ENCODE measurements at regions of chr12 and their contacts with region 1.

Region 1: GRCh38 chr12:132720606-132721005 is 10.0 kb downstream of the PGAM5 start:
- DNase-seq: no peak
- ATAC-seq: no peak
- H3K4me3 ChIP-seq: no peak overlapping the region
- H3K27ac ChIP-seq: no peak overlapping the region
- H3K4me1 ChIP-seq: peaks cover 8% of the 10 kb centered on the region
- H3K27me3 ChIP-seq: no peaks in the 10 kb centered on the region
- CTCF ChIP-seq: no peak

Region 2: DNA sequence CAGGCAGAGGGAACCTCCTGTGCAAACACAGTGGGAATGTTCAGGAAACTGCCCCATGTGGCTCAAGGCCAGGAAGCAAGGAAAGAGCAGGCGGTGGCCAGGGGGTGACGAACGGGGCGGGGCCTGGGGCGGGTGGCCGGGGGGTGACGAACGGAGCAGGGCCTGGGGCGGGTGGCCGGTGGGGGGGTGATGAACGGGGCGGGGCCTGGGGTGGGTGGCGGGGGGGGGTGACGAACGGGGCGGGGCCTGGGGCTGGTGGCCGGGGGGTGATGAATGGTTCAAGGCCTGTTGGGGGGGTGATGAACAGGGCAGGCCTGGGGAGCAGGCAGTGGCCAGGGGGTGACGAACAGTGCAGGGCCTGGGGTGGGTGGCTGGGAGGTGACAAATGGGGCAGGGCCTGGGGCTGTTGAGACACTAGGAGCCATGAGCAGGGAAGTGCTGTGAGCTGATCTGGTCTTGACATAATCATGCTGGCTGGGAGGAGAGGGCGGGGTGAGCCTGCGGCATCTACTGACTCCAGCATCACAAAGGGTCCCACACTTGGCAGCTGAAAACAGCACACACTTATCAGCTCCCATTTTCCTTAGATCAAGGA is 293.3 kb before region 1 on chr12:
- CTCF ChIA-PET with region 1: no interaction called
- POLR2A ChIA-PET with region 1: interaction called, 11 read pairs
- in situ Hi-C with region 1: no loop called
- intact Hi-C with region 1: no loop called
- DNase-seq: no peak
- ATAC-seq: no peak
- H3K4me3 ChIP-seq: no peak overlapping the region
- H3K27ac ChIP-seq: no peak overlapping the region
- H3K4me1 ChIP-seq: peaks cover 10% of the 10 kb centered on the region
- H3K27me3 ChIP-seq: no peaks in the 10 kb centered on the region
- CTCF ChIP-seq: no peak

Measured in Panc1 (cell line).